ENCODE measurements at regions of chr14 and their contacts with region 1.

Region 1: GRCh38 chr14:70942342-70942706 is 35.1 kb downstream of the PCNX1 start:
- DNase-seq: no peak
- ATAC-seq: peak in 1 of 3 donors; percentile 21
- H3K4me3 ChIP-seq: no peak overlapping the region
- H3K4me3 Mint-ChIP-seq: peak overlapping the region; percentile 56
- H3K27ac ChIP-seq: peak overlapping the region; percentile 3
- H3K27ac Mint-ChIP-seq: peak overlapping the region; percentile 81 to 82
- H3K4me1 ChIP-seq: peaks cover 20% of the 10 kb centered on the region
- H3K4me1 Mint-ChIP-seq: peaks cover 59 to 67% of the 10 kb centered on the region in 2 donors
- H3K27me3 ChIP-seq: no peaks in the 10 kb centered on the region
- H3K27me3 Mint-ChIP-seq: no peaks in the 10 kb centered on the region
- CTCF ChIP-seq: no peak

Region 2: DNA sequence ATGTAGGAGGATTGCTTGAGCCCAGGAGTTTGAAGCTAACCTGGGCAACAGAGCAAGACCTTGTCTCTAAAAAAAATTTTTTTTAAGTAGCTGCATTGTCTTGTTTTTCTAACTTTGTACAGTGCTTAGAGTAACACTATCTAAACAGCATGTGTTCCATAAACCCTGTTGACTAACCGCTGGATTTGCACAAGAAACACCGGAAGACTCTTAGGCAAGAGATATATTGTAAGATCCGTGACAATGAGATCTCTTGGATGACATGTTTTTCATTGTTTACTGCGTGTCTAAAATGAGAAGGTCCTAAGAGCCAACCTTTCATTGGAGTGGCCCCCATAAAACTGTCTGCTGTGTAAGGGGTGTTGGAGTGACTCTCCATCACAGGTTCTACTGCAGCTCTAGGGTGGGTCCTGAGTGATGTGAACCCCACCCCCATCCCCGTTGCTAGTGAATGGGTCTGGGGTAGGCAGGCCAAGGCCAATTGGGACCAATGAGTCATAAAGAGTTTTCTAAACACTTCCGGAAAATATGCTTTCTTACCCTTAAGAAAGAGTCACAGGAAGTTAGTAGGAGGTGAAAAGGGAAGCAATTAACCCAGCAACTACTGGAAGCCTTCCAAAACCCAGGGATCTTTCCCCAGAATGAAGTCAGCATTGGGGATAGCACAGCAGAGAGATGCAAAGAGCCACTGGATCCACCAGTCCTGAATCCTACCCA is 59.4 kb before region 1 on chr14:
- intact Hi-C with region 1: no loop called
- DNase-seq: peak in 1 of 2 donors; percentile 23
- ATAC-seq: peak in 2 of 3 donors; percentile 25 to 48
- H3K4me3 ChIP-seq: no peak overlapping the region
- H3K4me3 Mint-ChIP-seq: no peak overlapping the region
- H3K27ac ChIP-seq: no peak overlapping the region
- H3K27ac Mint-ChIP-seq: no peak overlapping the region
- H3K4me1 ChIP-seq: peaks cover 48% of the 10 kb centered on the region
- H3K4me1 Mint-ChIP-seq: peaks cover 38 to 57% of the 10 kb centered on the region in 2 donors
- H3K27me3 ChIP-seq: no peaks in the 10 kb centered on the region
- H3K27me3 Mint-ChIP-seq: peaks cover 0 to 6% of the 10 kb centered on the region in 2 donors
- CTCF ChIP-seq: no peak

Region 3: GRCh38 chr14:70907176-70907995 is 34.9 kb before region 1 on chr14 and contains the start of gene PCNX1:
- intact Hi-C with region 1: loop called (anchors 5 kb)
- DNase-seq: peak; percentile 89 to 93
- ATAC-seq: peak; percentile 81 to 92 (median 84)
- H3K4me3 ChIP-seq: peak within 1 kb of the TSS; percentile 97
- H3K4me3 Mint-ChIP-seq: peak within 1 kb of the TSS; percentile 93
- H3K27ac ChIP-seq: peak within 1 kb of the TSS; percentile 93
- H3K27ac Mint-ChIP-seq: peak within 1 kb of the TSS; percentile 92 to 100
- H3K4me1 ChIP-seq: peaks cover 15% of the 10 kb centered on the region
- H3K4me1 Mint-ChIP-seq: peaks cover 45 to 47% of the 10 kb centered on the region in 2 donors
- H3K27me3 ChIP-seq: no peaks in the 10 kb centered on the region
- H3K27me3 Mint-ChIP-seq: no peaks in the 10 kb centered on the region
- CTCF ChIP-seq: peak; percentile 85
- total RNA-seq, gene PCNX1: 79.8 to 124 (median 119) TPM

Region 4: DNA sequence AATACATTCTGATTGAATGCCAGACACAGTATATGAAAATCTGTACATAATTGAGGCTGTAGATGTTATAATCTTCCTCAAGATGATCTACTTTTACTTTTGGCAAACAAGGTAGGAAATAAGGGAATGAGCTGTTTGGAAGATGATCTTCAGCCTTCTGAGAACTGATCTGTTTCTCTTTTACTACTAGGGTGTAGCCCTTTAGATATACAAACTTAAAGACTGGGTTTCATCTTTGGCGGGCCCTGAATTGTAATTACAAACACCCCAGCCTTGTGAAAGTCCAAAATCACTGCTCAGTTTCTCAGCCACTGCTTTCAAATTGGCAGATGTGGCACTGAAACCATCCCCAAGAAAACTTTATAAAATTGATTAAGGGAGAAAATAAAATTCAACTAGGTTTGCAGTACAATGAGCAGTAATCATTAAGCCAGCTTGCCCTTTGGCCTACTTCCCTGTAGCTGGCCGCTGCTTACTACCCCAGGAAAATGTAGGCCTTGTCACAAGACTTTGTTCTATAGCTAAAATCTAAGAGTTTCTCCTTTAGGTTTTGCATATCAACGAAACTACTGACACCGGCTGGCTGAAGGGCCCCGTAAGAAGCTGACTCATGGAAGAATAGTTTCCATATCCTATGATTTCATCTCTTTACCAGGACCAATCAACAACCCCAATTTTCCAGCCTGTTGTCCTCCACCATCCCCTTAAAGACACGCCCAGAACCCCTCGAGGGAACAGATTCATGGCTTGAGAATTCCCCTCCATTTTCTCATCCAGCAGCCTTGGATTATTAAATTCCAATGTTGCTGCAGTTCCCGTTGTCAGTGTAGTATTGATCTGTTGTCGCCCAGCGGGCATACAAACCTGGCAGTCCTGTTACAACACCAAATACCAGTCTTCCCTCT is 175.8 kb after region 1 on chr14:
- intact Hi-C with region 1: no loop called
- DNase-seq: no peak
- ATAC-seq: no peak
- H3K4me3 ChIP-seq: no peak overlapping the region
- H3K4me3 Mint-ChIP-seq: no peak overlapping the region
- H3K27ac ChIP-seq: no peak overlapping the region
- H3K27ac Mint-ChIP-seq: peak overlapping the region; percentile 25 to 54
- H3K4me1 ChIP-seq: no peaks in the 10 kb centered on the region
- H3K4me1 Mint-ChIP-seq: peaks cover 0 to 5% of the 10 kb centered on the region in 2 donors
- H3K27me3 ChIP-seq: no peaks in the 10 kb centered on the region
- H3K27me3 Mint-ChIP-seq: no peaks in the 10 kb centered on the region
- CTCF ChIP-seq: no peak